ENCODE measurements at regions of chr11 and their contacts with region 1.

Region 1: GRCh38 chr11:33478111-33478573 is 221.0 kb downstream of the HIPK3 start:
- DNase-seq: no peak
- ATAC-seq: no peak
- H3K4me3 ChIP-seq: no peak overlapping the region
- H3K27ac ChIP-seq: no peak overlapping the region
- H3K4me1 ChIP-seq: peaks cover 7% of the 10 kb centered on the region; the same call in 1 of the 2 replicates
- H3K27me3 ChIP-seq: no peaks in the 10 kb centered on the region
- CTCF ChIP-seq: no peak

Region 2: DNA sequence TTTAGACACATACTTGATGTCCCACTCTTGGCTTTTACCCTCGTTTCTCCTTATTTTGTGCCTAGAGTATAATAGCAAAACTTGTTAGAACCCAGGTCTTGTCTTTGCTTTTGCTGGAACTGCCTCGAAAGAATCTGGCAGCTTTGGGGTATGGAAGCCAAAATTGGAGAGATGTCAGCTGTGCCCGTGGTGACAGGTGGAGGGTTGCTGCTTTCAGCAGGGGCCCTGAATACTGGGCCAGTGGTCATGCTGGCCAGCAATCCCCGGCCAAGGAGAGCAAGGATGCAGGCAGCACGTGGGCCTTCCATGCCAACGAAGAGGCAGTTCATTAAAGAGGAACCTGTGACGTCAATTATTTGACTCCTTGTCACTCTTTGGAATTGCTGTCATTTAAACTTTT is 39.8 kb before region 1 on chr11:
- CTCF ChIA-PET with region 1: no interaction called
- POLR2A ChIA-PET with region 1: interaction called, 11 read pairs
- in situ Hi-C with region 1: no loop called
- intact Hi-C with region 1: no loop called
- DNase-seq: no peak
- ATAC-seq: no peak
- H3K4me3 ChIP-seq: no peak overlapping the region
- H3K27ac ChIP-seq: no peak overlapping the region
- H3K4me1 ChIP-seq: no peaks in the 10 kb centered on the region
- H3K27me3 ChIP-seq: no peaks in the 10 kb centered on the region
- CTCF ChIP-seq: no peak

Measured in Panc1 (cell line).